Esophagus muscularis mucosa (tissue), 4 donors: ENCODE measurements at regions of chr5 and their contacts with region 1.

Region 1: GRCh38 chr5:146049014-146049703 is 56.2 kb downstream of the PLAC8L1 start:
- DNase-seq: no peak
- H3K4me3 ChIP-seq: no peak overlapping the region
- H3K27ac ChIP-seq: no peak overlapping the region
- H3K4me1 ChIP-seq: no peaks in the 10 kb centered on the region
- H3K27me3 ChIP-seq: no peaks in the 10 kb centered on the region
- CTCF ChIP-seq: peak; percentile 57 to 60 (median 59)
- EP300 ChIP-seq: no peak
- POLR2A ChIP-seq: no peak

Region 2: DNA sequence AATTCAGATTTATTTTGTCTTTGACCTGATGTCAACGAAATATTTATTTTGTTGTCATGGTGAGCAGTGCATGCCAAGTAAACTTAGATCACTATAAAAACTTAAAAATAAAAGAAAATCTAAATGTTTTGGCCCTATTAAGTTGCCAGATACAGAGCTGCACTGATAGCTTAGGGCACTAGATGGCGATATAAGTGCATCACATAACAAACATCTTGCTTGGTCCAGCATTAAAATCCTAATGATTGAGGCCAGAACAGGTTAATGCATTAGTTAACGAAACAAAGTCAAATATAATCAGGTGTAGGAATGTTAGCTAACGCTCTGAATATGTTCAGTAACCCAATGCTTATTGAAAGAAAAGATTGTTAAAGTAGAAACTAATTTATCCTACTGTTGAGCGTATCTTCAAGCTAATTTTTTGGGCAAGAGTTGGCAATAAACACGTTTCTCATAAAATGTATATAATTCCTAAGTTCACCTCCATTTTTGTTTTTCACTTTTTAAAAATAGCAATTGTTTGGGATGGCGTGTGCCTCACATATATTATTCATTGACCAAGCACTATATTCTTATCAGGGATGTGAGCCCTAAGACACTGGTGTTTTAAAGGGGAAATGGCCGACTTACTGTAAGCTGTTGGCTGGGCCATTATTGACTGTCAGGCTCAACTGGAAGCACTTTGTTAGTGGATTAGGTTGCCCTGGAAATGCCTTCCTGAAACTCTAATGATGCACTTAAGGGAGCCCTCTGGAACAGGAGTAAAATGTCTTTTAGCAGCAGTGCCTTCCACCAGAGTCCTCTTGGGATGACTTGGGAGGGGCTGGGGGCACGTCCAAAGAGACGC is 1845.2 kb before region 1 on chr5:
- intact Hi-C with region 1: loop called (anchors 10 kb)
- DNase-seq: no peak
- H3K4me3 ChIP-seq: no peak overlapping the region
- H3K27ac ChIP-seq: no peak overlapping the region
- H3K4me1 ChIP-seq: peaks cover 5 to 19% (median 15%) of the 10 kb centered on the region in 4 donors
- H3K27me3 ChIP-seq: peaks cover 0 to 58% (median 16%) of the 10 kb centered on the region in 4 donors
- CTCF ChIP-seq: peak; percentile 74 to 92 (median 83)
- EP300 ChIP-seq: no peak
- POLR2A ChIP-seq: no peak

Region 3: GRCh38 chr5:145697251-145697990 is 351.7 kb before region 1 on chr5:
- intact Hi-C with region 1: loop called (anchors 10 kb)
- DNase-seq: no peak
- H3K4me3 ChIP-seq: no peak overlapping the region
- H3K27ac ChIP-seq: no peak overlapping the region
- H3K4me1 ChIP-seq: no peaks in the 10 kb centered on the region
- H3K27me3 ChIP-seq: no peaks in the 10 kb centered on the region
- CTCF ChIP-seq: peak in 2 of 3 experiments; percentile 30
- EP300 ChIP-seq: no peak
- POLR2A ChIP-seq: no peak

Region 4: DNA sequence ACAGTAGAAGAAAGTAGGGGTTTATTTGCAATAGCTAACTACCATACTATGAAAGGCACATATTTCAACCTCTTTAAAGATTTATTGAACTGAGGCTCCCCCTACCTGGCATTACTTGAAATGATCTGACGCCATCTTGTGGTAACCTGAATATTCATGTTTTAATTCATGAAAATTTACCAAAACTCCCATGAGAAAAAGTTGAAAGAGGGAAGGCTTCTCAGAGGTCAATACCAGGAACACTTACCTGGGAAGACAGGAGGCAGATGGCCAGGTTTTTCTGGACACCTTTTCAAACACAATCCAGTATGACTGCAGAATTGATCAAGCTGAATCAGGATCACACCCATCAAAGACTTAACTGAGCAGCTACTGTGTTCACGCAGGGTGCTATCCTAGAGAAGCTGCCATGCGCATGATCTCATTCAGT is 223.4 kb before region 1 on chr5:
- intact Hi-C with region 1: loop called (anchors 10 kb)
- DNase-seq: peak; percentile 53
- H3K4me3 ChIP-seq: no peak overlapping the region
- H3K27ac ChIP-seq: no peak overlapping the region
- H3K4me1 ChIP-seq: peaks cover 10 to 16% (median 14%) of the 10 kb centered on the region in 4 donors
- H3K27me3 ChIP-seq: no peaks in the 10 kb centered on the region
- CTCF ChIP-seq: peak; percentile 61 to 69 (median 61)
- EP300 ChIP-seq: no peak
- POLR2A ChIP-seq: no peak

Region 5: DNA sequence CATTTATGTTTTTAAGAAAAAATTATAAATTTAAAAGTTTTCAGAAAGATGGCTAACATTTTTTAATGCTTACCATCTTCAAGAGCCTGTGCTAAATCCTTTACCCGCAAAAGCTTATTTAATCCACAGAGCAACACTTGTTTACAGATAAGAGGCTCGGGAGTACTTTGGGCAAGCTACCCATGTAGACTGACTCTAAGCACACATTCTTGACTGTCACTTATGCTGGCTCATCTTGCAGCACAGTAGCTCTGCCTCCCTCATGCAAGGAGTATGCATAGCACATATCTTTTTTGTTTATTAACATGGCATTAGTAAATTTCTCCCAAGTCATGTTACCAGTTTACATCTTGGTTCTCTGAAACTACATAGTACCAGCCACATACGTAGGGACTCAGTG is 98.1 kb before region 1 on chr5:
- intact Hi-C with region 1: no loop called
- DNase-seq: no peak
- H3K4me3 ChIP-seq: no peak overlapping the region
- H3K27ac ChIP-seq: no peak overlapping the region
- H3K4me1 ChIP-seq: peaks cover 0 to 11% (median 0%) of the 10 kb centered on the region in 4 donors
- H3K27me3 ChIP-seq: no peaks in the 10 kb centered on the region
- CTCF ChIP-seq: no peak
- EP300 ChIP-seq: no peak
- POLR2A ChIP-seq: no peak

Region 6: DNA sequence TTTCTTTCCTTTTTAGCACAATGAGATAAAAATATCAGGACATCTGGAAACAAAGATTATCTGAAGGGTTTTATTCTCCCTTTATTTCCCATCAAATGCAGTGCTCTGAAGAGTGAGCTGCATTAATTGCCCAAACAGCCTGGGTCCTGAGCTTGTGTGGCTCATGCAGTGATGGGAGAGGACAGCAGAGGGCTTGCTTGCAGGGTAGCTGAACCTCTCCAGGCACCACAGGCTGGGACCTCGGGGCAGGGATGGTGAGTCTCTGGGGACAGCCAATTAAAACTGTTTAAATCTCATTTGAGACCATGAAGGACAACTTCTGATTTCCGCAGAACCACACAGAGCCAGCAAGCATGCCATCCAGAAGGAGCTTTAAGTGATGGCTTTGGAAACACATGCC is 15.0 kb before region 1 on chr5:
- intact Hi-C with region 1: no loop called
- DNase-seq: no peak
- H3K4me3 ChIP-seq: no peak overlapping the region
- H3K27ac ChIP-seq: no peak overlapping the region
- H3K4me1 ChIP-seq: no peaks in the 10 kb centered on the region
- H3K27me3 ChIP-seq: no peaks in the 10 kb centered on the region
- CTCF ChIP-seq: no peak
- EP300 ChIP-seq: no peak
- POLR2A ChIP-seq: no peak

Region 7: GRCh38 chr5:147017191-147017590 is 968.0 kb after region 1 on chr5:
- intact Hi-C with region 1: no loop called
- DNase-seq: no peak
- H3K4me3 ChIP-seq: no peak overlapping the region
- H3K27ac ChIP-seq: no peak overlapping the region
- H3K4me1 ChIP-seq: no peaks in the 10 kb centered on the region
- H3K27me3 ChIP-seq: no peaks in the 10 kb centered on the region
- CTCF ChIP-seq: no peak
- EP300 ChIP-seq: no peak
- POLR2A ChIP-seq: no peak